CD4-positive, alpha-beta memory T cell (primary cell): ENCODE measurements at regions of chr13 and their contacts with region 1.

Region 1: GRCh38 chr13:32586080-32586900 is at the start of gene PDS5B:
- DNase-seq: peak; percentile 96 to 98 (median 96)
- H3K4me3 ChIP-seq: peak within 1 kb of the TSS; percentile 62 to 93
- H3K4me3 Mint-ChIP-seq: peak within 1 kb of the TSS; percentile 90 to 99 (median 96)
- H3K27ac ChIP-seq: peak within 1 kb of the TSS; percentile 68
- H3K27ac Mint-ChIP-seq: peak within 1 kb of the TSS; percentile 94 to 98 (median 96)
- H3K4me1 ChIP-seq: peaks cover 39% of the 10 kb centered on the region
- H3K4me1 Mint-ChIP-seq: peaks cover 27 to 46% (median 37%) of the 10 kb centered on the region in 4 donors
- H3K27me3 ChIP-seq: no peaks in the 10 kb centered on the region
- H3K27me3 Mint-ChIP-seq: no peaks in the 10 kb centered on the region
- total RNA-seq, gene PDS5B: 56.1 to 56.3 TPM

Region 2: GRCh38 chr13:31119966-31120700 is 1466.2 kb before region 1 on chr13:
- CTCF ChIA-PET with region 1: no interaction called
- POLR2A ChIA-PET with region 1: no interaction called
- intact Hi-C with region 1: no loop called
- DNase-seq: no peak
- H3K4me3 ChIP-seq: no peak overlapping the region
- H3K4me3 Mint-ChIP-seq: no peak overlapping the region
- H3K27ac ChIP-seq: no peak overlapping the region
- H3K27ac Mint-ChIP-seq: no peak overlapping the region
- H3K4me1 ChIP-seq: no peaks in the 10 kb centered on the region
- H3K4me1 Mint-ChIP-seq: peaks cover 0 to 2% (median 0%) of the 10 kb centered on the region in 4 donors
- H3K27me3 ChIP-seq: no peaks in the 10 kb centered on the region
- H3K27me3 Mint-ChIP-seq: peaks cover 17 to 37% of the 10 kb centered on the region in 2 donors

Region 3: GRCh38 chr13:32150794-32151193 is 435.5 kb before region 1 on chr13:
- CTCF ChIA-PET with region 1: no interaction called
- POLR2A ChIA-PET with region 1: no interaction called
- intact Hi-C with region 1: no loop called
- DNase-seq: no peak
- H3K4me3 ChIP-seq: no peak overlapping the region
- H3K4me3 Mint-ChIP-seq: no peak overlapping the region
- H3K27ac ChIP-seq: no peak overlapping the region
- H3K27ac Mint-ChIP-seq: no peak overlapping the region
- H3K4me1 ChIP-seq: no peaks in the 10 kb centered on the region
- H3K4me1 Mint-ChIP-seq: no peaks in the 10 kb centered on the region
- H3K27me3 ChIP-seq: no peaks in the 10 kb centered on the region
- H3K27me3 Mint-ChIP-seq: peaks cover 0 to 1% of the 10 kb centered on the region in 2 donors

Region 4: GRCh38 chr13:32315238-32316027 is 270.9 kb before region 1 on chr13 and contains the starts of genes BRCA2 and ZAR1L:
- CTCF ChIA-PET with region 1: interaction called, 5 read pairs
- POLR2A ChIA-PET with region 1: interaction called, 4 read pairs
- intact Hi-C with region 1: loop called (anchors 1 kb)
- DNase-seq: peak; percentile 85 to 89 (median 87)
- H3K4me3 ChIP-seq: peak within 1 kb of the TSS; percentile 59 to 81
- H3K4me3 Mint-ChIP-seq: peak within 1 kb of the TSS; percentile 91 to 100 (median 96)
- H3K27ac ChIP-seq: peak within 1 kb of the TSS; percentile 99
- H3K27ac Mint-ChIP-seq: peak within 1 kb of the TSS; percentile 98 to 100 (median 100)
- H3K4me1 ChIP-seq: peaks cover 16% of the 10 kb centered on the region
- H3K4me1 Mint-ChIP-seq: peaks cover 7 to 27% (median 11%) of the 10 kb centered on the region in 4 donors
- H3K27me3 ChIP-seq: no peaks in the 10 kb centered on the region
- H3K27me3 Mint-ChIP-seq: no peaks in the 10 kb centered on the region
- total RNA-seq, gene BRCA2: 3.2 TPM
- total RNA-seq, gene ZAR1L: not detected

Region 5: GRCh38 chr13:32538621-32539246 is 47.6 kb before region 1 on chr13 and contains the start of gene N4BP2L2:
- CTCF ChIA-PET with region 1: interaction called, 17 read pairs
- POLR2A ChIA-PET with region 1: interaction called, 22 read pairs
- intact Hi-C with region 1: loop called (anchors 1 kb)
- DNase-seq: peak; percentile 89 to 95 (median 91)
- H3K4me3 ChIP-seq: peak within 1 kb of the TSS; percentile 87 to 100
- H3K4me3 Mint-ChIP-seq: peak within 1 kb of the TSS; percentile 95 to 100 (median 99)
- H3K27ac ChIP-seq: peak within 1 kb of the TSS; percentile 99
- H3K27ac Mint-ChIP-seq: peak within 1 kb of the TSS; percentile 99 to 100 (median 100)
- H3K4me1 ChIP-seq: peaks cover 39% of the 10 kb centered on the region
- H3K4me1 Mint-ChIP-seq: peaks cover 32 to 57% (median 44%) of the 10 kb centered on the region in 4 donors
- H3K27me3 ChIP-seq: no peaks in the 10 kb centered on the region
- H3K27me3 Mint-ChIP-seq: no peaks in the 10 kb centered on the region
- total RNA-seq, gene N4BP2L2: 337 to 351 TPM

Region 6: DNA sequence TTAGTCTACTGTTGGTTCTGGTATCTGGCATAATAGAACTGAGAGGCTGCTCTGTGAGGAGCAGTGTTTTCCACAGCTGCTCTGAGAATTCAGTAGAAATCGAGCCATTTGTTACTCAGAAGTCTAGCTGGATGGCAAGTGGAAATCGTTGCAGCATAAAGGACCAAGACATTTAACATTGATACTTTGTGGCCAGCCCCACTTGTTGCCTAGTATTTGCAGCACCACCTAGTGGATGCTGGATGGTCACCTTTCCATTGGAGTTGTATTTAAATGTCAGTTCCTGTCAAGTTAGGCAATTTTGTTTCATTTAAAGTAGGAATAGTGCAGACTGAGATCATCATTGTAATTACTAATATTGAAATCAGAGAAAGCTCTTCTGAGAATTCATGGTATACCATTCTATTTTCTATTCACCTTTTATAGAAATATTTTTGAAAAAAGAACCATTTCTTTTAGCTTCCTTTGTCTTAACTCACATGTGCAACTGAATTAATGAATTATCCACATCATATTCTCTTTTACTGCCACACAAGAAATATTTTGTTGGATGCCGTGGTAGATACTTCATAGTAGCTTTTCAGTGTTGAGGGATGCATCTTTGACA is 64.5 kb after region 1 on chr13:
- CTCF ChIA-PET with region 1: interaction called, 90 read pairs
- POLR2A ChIA-PET with region 1: interaction called, 18 read pairs
- intact Hi-C with region 1: loop called (anchors 1 kb)
- DNase-seq: peak; percentile 42 to 56 (median 52)
- H3K4me3 ChIP-seq: no peak overlapping the region
- H3K4me3 Mint-ChIP-seq: no peak overlapping the region
- H3K27ac ChIP-seq: no peak overlapping the region
- H3K27ac Mint-ChIP-seq: peak overlapping the region in 2 of 7 donors; percentile 28 to 44
- H3K4me1 ChIP-seq: peaks cover 23% of the 10 kb centered on the region
- H3K4me1 Mint-ChIP-seq: peaks cover 24 to 52% (median 40%) of the 10 kb centered on the region in 4 donors
- H3K27me3 ChIP-seq: no peaks in the 10 kb centered on the region
- H3K27me3 Mint-ChIP-seq: no peaks in the 10 kb centered on the region

Region 7: GRCh38 chr13:32911506-32911905 is 325.2 kb after region 1 on chr13:
- CTCF ChIA-PET with region 1: no interaction called
- POLR2A ChIA-PET with region 1: no interaction called
- intact Hi-C with region 1: loop called (anchors 5 kb)
- DNase-seq: no peak
- H3K4me3 ChIP-seq: no peak overlapping the region
- H3K4me3 Mint-ChIP-seq: no peak overlapping the region
- H3K27ac ChIP-seq: no peak overlapping the region
- H3K27ac Mint-ChIP-seq: no peak overlapping the region
- H3K4me1 ChIP-seq: no peaks in the 10 kb centered on the region
- H3K4me1 Mint-ChIP-seq: no peaks in the 10 kb centered on the region
- H3K27me3 ChIP-seq: no peaks in the 10 kb centered on the region
- H3K27me3 Mint-ChIP-seq: peaks cover 2% of the 10 kb centered on the region in 2 donors

Region 8: DNA sequence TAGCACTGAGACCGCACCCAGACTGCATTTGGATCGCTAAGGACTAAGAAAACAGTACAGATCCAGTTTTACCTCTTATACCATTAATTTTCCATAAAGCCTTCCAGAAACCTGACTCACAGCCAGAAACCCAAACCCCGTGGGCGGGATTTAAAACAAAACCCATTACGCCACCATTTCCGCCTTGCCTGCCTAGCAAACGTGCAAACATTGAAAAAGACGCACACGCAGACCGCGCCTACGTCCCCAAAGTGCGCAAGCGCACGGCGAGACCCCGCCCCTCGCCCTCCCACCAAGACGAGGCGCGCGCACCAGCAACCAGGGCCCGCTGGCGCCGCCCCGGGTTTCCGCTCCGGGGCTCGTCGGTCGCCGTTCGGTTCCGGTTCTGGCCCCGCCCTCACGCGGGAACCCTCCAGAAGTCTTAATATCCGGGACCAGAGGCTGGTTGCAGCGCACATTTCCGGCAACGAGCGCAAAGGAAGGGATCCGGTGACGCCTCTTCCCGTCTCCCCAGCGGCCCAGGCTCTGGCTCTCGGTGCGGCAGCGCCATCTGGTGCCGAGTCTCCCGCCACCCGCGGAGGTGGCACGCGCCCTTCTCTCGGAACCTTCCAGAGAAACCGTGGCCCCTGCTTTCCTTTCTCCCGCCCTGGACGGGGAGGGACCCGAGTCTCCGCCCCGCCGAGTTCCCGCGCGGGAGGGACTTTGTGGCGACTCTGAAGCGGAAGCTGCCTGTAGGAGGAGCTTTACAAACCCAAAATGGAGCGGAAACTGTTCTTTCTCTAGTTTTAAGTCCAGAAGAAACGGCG is 956.2 kb after region 1 on chr13:
- CTCF ChIA-PET with region 1: interaction called, 3 read pairs
- POLR2A ChIA-PET with region 1: interaction called, 11 read pairs
- intact Hi-C with region 1: loop called (anchors 1 kb)
- DNase-seq: peak; percentile 99 to 100 (median 99)
- H3K4me3 ChIP-seq: peak overlapping the region; percentile 75 to 82
- H3K4me3 Mint-ChIP-seq: peak overlapping the region; percentile 92 to 98 (median 94)
- H3K27ac ChIP-seq: peak overlapping the region; percentile 96
- H3K27ac Mint-ChIP-seq: peak overlapping the region; percentile 98 to 100 (median 98)
- H3K4me1 ChIP-seq: peaks cover 43% of the 10 kb centered on the region
- H3K4me1 Mint-ChIP-seq: peaks cover 28 to 53% (median 39%) of the 10 kb centered on the region in 4 donors
- H3K27me3 ChIP-seq: no peaks in the 10 kb centered on the region
- H3K27me3 Mint-ChIP-seq: no peaks in the 10 kb centered on the region

Region 9: GRCh38 chr13:33723772-33724435 is 1137.6 kb after region 1 on chr13:
- CTCF ChIA-PET with region 1: interaction called, 5 read pairs
- POLR2A ChIA-PET with region 1: no interaction called
- intact Hi-C with region 1: loop called (anchors 2 kb)
- DNase-seq: peak; percentile 63 to 74 (median 72)
- H3K4me3 ChIP-seq: no peak overlapping the region
- H3K4me3 Mint-ChIP-seq: peak overlapping the region in 6 of 8 donors; percentile 17 to 70 (median 54)
- H3K27ac ChIP-seq: no peak overlapping the region
- H3K27ac Mint-ChIP-seq: peak overlapping the region in 6 of 7 donors; percentile 49 to 81 (median 64)
- H3K4me1 ChIP-seq: peaks cover 23% of the 10 kb centered on the region
- H3K4me1 Mint-ChIP-seq: peaks cover 10 to 23% (median 20%) of the 10 kb centered on the region in 4 donors
- H3K27me3 ChIP-seq: no peaks in the 10 kb centered on the region
- H3K27me3 Mint-ChIP-seq: no peaks in the 10 kb centered on the region